Transverse colon (tissue), 4 donors: ENCODE measurements at regions of chr5 and their contacts with region 1.

Region 1: DNA sequence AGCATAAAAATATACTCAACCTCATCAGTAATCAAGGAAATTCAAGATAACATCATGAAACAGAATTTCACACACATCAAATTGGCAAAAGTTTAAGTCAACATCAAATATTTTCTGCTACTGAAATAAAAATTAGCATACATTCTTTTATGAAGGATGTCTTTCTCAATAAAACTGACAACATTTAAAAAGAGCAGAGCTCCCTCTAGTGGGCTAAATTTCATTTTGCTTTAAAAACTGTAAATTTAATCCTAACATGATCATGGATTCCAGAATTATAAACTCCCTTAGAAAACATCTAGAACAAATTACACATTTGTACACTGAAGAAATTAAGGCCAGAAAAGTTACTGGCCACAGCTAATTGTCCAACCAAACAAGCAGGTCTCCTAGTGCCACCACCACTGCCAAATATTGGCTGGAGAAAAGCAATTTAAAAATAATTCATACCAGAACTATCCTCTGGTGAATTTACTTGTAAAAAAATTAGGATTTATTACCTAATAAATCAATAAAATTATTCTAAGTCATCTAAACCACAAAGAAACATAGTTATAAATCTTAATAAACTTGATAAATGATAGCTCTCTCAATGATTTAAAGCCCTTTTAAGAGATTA is 31.2 kb downstream of the DEPDC1B start:
- DNase-seq: no peak
- H3K4me3 ChIP-seq: no peak overlapping the region
- H3K27ac ChIP-seq: no peak overlapping the region
- H3K4me1 ChIP-seq: peaks cover 7 to 31% (median 13%) of the 10 kb centered on the region in 4 donors
- H3K27me3 ChIP-seq: no peaks in the 10 kb centered on the region
- CTCF ChIP-seq: peak; percentile 49 to 74 (median 67)
- EP300 ChIP-seq: no peak
- POLR2A ChIP-seq: no peak

Region 2: GRCh38 chr5:59819806-59820205 is 849.0 kb before region 1 on chr5:
- in situ Hi-C with region 1: loop called in 3 of 4 experiments (anchors 5 to 10 kb)
- intact Hi-C with region 1: no loop called
- DNase-seq: no peak
- H3K4me3 ChIP-seq: no peak overlapping the region
- H3K27ac ChIP-seq: no peak overlapping the region
- H3K4me1 ChIP-seq: no peaks in the 10 kb centered on the region
- H3K27me3 ChIP-seq: no peaks in the 10 kb centered on the region
- CTCF ChIP-seq: no peak
- EP300 ChIP-seq: no peak
- POLR2A ChIP-seq: no peak

Region 3: DNA sequence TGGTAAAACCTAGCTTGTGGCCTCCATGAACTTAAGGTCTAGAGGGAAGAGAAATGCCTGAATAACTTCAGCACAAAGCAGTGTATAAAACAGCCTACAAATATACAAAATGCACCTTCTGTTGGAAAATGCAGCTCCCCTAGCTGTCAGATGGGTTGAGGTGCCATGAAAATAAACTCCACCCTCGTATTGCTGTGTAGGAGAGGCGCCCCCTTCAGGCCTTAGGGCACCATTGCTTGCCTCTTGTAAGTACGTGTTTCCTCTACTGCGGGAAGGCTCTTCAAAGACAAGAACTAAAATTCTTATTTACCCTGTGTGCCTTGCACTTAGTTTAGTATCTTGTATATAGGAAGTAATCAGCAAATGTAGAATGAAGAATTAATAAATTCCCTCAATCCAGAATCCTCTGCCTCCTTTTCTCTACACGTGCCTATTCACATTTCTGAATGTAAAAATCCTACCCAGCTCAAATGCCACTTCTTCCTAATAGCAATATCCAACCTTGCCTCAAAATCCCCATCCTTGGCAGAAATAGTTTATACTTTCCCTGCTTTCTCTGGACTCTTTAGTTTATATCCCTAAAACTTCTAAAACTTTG is 381.5 kb before region 1 on chr5:
- in situ Hi-C with region 1: loop called in 1 of 4 experiments (anchors 25 kb)
- intact Hi-C with region 1: no loop called
- DNase-seq: peak; percentile 26
- H3K4me3 ChIP-seq: no peak overlapping the region
- H3K27ac ChIP-seq: no peak overlapping the region
- H3K4me1 ChIP-seq: no peaks in the 10 kb centered on the region
- H3K27me3 ChIP-seq: no peaks in the 10 kb centered on the region
- CTCF ChIP-seq: peak in 4 of 5 experiments; percentile 30 to 52 (median 36)
- EP300 ChIP-seq: no peak
- POLR2A ChIP-seq: no peak